B cell (primary cell): ENCODE measurements at regions of chr17 and their contacts with region 1.

Region 1: GRCh38 chr17:8935191-8935590 is 30.3 kb downstream of the PIK3R5 start:
- DNase-seq: peak; percentile 32
- ATAC-seq: peak; percentile 41
- H3K4me3 ChIP-seq: no peak overlapping the region
- H3K4me3 Mint-ChIP-seq: no peak overlapping the region
- H3K27ac ChIP-seq: peak overlapping the region in 1 of 2 donors; percentile 18
- H3K27ac Mint-ChIP-seq: peak overlapping the region; percentile 21
- H3K4me1 ChIP-seq: peaks cover 14 to 26% of the 10 kb centered on the region in 2 donors
- H3K4me1 Mint-ChIP-seq: peaks cover 47% of the 10 kb centered on the region
- H3K27me3 ChIP-seq: no peaks in the 10 kb centered on the region
- H3K27me3 Mint-ChIP-seq: no peaks in the 10 kb centered on the region
- CTCF ChIP-seq: no peak

Region 2: DNA sequence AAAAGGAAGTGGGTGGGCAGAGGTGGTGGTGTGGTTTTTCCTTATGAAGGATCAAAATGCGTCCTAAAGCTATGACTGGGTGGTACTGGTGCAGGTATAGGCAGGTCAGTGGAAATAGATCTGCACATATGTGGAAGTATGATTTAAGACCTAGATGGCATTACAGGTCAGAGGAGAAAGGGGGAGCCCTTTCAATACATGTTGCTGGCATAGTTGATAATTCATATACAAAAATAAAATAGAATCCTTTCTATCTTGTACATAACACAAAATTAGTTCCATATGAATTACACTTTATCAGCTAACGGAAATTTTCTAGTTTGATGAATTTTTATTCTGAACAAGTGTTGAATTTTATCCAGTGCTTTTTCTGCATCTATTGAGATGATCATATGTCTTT is 51.1 kb after region 1 on chr17:
- CTCF ChIA-PET with region 1: no interaction called
- POLR2A ChIA-PET with region 1: no interaction called
- intact Hi-C with region 1: loop called (anchors 10 kb)
- DNase-seq: no peak
- ATAC-seq: no peak
- H3K4me3 ChIP-seq: no peak overlapping the region
- H3K4me3 Mint-ChIP-seq: peak overlapping the region; percentile 10
- H3K27ac ChIP-seq: no peak overlapping the region
- H3K27ac Mint-ChIP-seq: peak overlapping the region; percentile 8
- H3K4me1 ChIP-seq: peaks cover 14 to 17% of the 10 kb centered on the region in 2 donors
- H3K4me1 Mint-ChIP-seq: peaks cover 15% of the 10 kb centered on the region
- H3K27me3 ChIP-seq: no peaks in the 10 kb centered on the region
- H3K27me3 Mint-ChIP-seq: peaks cover under 1% of the 10 kb centered on the region
- CTCF ChIP-seq: peak; percentile 24